T-cell (primary cell): ENCODE measurements at regions of chr11 and their contacts with region 1.

Region 1: GRCh38 chr11:65095974-65096806 is at the start of gene VPS51:
- DNase-seq: peak; percentile 72 to 93 (median 82)
- ATAC-seq: peak; percentile 86 to 88 (median 86)
- H3K4me3 ChIP-seq: peak within 1 kb of the TSS; percentile 39 to 78
- H3K4me3 Mint-ChIP-seq: peak within 1 kb of the TSS; percentile 81 to 93 (median 85)
- H3K27ac ChIP-seq: peak within 1 kb of the TSS; percentile 83
- H3K27ac Mint-ChIP-seq: peak within 1 kb of the TSS; percentile 92 to 94
- H3K4me1 ChIP-seq: peaks cover 7 to 22% of the 10 kb centered on the region in 2 experiments
- H3K4me1 Mint-ChIP-seq: peaks cover 13 to 24% (median 23%) of the 10 kb centered on the region in 3 donors
- H3K27me3 ChIP-seq: no peaks in the 10 kb centered on the region
- H3K27me3 Mint-ChIP-seq: no peaks in the 10 kb centered on the region
- total RNA-seq, gene VPS51: 210 to 303 (median 263) TPM

Region 2: DNA sequence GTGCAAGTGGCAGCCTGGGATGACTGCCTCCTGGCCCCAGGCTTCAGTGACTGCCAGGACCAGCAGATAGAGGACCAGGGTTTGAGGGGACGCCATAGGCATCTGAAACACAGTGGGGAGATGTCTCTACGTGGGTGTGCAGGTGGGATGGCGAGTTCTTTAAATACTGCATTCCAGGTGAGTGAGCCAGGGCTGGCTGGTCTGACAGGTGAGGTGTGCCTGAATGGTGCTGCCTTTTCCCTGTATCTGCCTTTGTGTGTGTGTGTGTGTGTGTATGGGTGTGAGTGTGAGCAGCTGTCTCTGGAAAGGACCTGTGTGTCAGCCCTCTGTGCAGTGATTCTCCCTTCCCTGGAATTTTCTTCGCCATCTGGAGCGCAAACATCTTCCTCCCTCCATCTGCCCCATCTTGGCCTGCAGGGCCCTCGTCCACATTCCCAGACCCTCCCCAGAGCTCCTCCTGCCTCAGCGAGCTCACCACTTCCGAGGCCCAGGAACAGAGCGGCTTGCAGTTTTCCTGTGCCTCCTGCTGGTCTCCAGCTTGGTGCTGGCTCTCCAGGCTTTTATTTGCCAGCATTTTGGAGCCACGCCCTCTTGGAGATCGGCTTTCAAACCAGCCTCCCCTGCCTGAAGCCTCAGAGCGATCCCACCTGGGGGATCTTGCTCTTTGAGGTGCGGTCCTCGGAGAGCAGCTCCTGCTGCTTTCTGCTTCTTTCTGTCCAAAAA is 160.7 kb before region 1 on chr11 and contains the start of gene GPHA2:
- CTCF ChIA-PET with region 1: no interaction called
- POLR2A ChIA-PET with region 1: no interaction called
- DNase-seq: no peak
- ATAC-seq: no peak
- H3K4me3 ChIP-seq: no peak within 1 kb of the TSS
- H3K4me3 Mint-ChIP-seq: no peak within 1 kb of the TSS
- H3K27ac ChIP-seq: no peak within 1 kb of the TSS
- H3K27ac Mint-ChIP-seq: no peak within 1 kb of the TSS
- H3K4me1 ChIP-seq: no peaks in the 10 kb centered on the region
- H3K4me1 Mint-ChIP-seq: no peaks in the 10 kb centered on the region
- H3K27me3 ChIP-seq: peaks cover 2 to 6% of the 10 kb centered on the region in 2 experiments
- H3K27me3 Mint-ChIP-seq: peaks cover 0 to 4% of the 10 kb centered on the region in 2 donors
- total RNA-seq, gene GPHA2: 0.90 TPM in 1 of 5 donors, not detected in the others

Region 3: GRCh38 chr11:65150509-65151271 is 54.5 kb after region 1 on chr11:
- CTCF ChIA-PET with region 1: no interaction called
- POLR2A ChIA-PET with region 1: interaction called in 1 of 2 experiments, 11 read pairs
- DNase-seq: peak in 2 of 35 experiments; percentile 15 to 46
- ATAC-seq: no peak
- H3K4me3 ChIP-seq: no peak overlapping the region
- H3K4me3 Mint-ChIP-seq: no peak overlapping the region
- H3K27ac ChIP-seq: no peak overlapping the region
- H3K27ac Mint-ChIP-seq: no peak overlapping the region
- H3K4me1 ChIP-seq: no peaks in the 10 kb centered on the region
- H3K4me1 Mint-ChIP-seq: peaks cover 0 to 6% (median 0%) of the 10 kb centered on the region in 3 donors
- H3K27me3 ChIP-seq: peaks cover 0 to 4% of the 10 kb centered on the region in 2 experiments
- H3K27me3 Mint-ChIP-seq: peaks cover 0 to 3% of the 10 kb centered on the region in 2 donors